ENCODE measurements at regions of chr7 and their contacts with region 1.

Region 1: DNA sequence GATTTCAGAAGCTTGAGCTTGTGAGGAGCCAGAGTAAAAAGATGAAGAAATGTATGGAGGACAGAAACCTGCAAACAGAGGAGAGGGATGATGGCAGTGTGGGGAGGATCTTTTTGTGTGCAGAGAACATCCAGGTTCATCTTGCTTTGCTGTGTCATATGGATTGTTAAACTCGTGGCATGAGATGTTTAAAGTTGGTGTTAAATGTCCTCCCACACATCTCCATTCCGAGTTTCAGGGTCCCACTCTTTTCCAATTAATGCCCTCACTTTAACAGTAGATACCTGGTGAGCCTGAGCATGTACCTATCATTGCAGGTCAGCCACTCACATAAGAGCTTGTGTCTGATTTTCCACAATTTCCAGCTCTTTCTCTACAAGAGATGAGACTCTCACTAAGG is 147.7 kb downstream of the ST7 start:
- DNase-seq: no peak
- ATAC-seq: no peak
- H3K4me3 ChIP-seq: no peak overlapping the region
- H3K27ac ChIP-seq: no peak overlapping the region
- H3K4me1 ChIP-seq: no peaks in the 10 kb centered on the region
- H3K27me3 ChIP-seq: no peaks in the 10 kb centered on the region
- CTCF ChIP-seq: no peak

Region 2: DNA sequence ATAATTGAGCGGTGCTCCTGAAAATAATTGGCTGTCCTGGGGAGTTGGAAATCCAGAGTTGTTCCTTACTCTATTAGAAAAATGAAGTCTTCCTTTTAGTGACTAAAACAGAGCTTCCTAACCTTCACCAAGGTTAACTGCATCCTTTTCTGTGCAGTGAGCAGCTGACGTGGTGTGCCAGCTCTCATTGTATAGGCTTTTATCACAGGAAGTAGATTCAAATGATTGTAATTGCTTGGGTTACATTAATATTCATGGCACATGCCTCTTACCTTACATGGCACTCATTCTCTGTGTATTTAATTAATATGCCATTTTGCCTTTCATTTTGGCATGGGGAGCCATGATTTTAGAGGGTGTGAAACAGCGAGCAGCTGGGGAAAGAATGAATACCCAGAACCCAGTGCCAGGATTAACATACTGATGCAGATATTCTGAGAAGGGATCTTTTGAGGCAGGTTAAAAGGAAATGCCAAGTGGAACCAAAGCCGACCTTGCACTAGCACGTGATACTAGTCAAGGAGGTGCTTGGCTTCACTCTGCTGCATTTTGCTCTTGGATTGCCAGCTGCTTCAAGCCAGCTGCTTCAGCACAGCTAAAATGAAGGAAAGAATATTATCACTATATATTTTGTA is 32.4 kb before region 1 on chr7:
- intact Hi-C with region 1: loop called in 1 of 2 experiments (anchors 5 kb)
- DNase-seq: no peak
- ATAC-seq: no peak
- H3K4me3 ChIP-seq: no peak overlapping the region
- H3K27ac ChIP-seq: no peak overlapping the region
- H3K4me1 ChIP-seq: peaks cover 41% of the 10 kb centered on the region
- H3K27me3 ChIP-seq: no peaks in the 10 kb centered on the region
- CTCF ChIP-seq: no peak

Region 3: GRCh38 chr7:118239014-118239413 is 1138.0 kb after region 1 on chr7:
- intact Hi-C with region 1: no loop called
- DNase-seq: no peak
- ATAC-seq: no peak
- H3K4me3 ChIP-seq: no peak overlapping the region
- H3K27ac ChIP-seq: no peak overlapping the region
- H3K4me1 ChIP-seq: no peaks in the 10 kb centered on the region
- H3K27me3 ChIP-seq: no peaks in the 10 kb centered on the region
- CTCF ChIP-seq: no peak

Measured in psoas muscle (tissue), 8 donors.